ENCODE measurements at regions of chr2 and their contacts with region 1.

Region 1: DNA sequence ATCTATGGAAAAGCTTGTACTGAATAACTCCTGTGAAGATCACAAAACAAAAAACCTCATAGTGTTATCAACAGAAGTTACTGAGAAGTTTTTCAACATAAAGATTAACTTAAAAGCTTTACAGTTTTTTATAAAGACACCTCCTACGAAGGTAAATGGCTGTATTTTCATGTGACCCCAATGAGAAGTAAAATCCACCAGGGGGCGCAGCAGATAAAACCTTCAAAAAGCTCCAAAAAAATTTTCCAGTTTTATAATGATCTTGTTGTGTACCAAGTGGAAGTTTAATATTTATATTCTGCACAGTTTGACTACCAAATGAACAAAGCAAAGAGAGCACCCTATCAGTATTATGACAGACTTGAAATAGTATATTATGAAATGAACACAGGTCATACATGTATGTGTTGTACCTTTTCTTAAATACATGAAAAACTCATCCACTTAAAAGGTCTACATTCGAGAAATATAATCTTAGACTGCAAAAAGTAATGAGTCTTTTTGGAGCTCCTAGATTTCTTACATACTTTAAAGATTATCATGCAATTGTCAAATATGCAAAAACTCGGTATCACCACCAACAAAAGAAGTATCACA is 38.5 kb downstream of the PNO1 start:
- DNase-seq: no peak
- CTCF ChIP-seq: peak; percentile 39

Region 2: GRCh38 chr2:68169297-68169696 is 26.9 kb before region 1 on chr2:
- CTCF ChIA-PET with region 1: interaction called, 48 read pairs
- POLR2A ChIA-PET with region 1: no interaction called
- DNase-seq: no peak
- CTCF ChIP-seq: no peak

Region 3: GRCh38 chr2:68185541-68186164 is 10.6 kb before region 1 on chr2:
- CTCF ChIA-PET with region 1: interaction called, 61 read pairs
- POLR2A ChIA-PET with region 1: no interaction called
- DNase-seq: peak; percentile 31
- CTCF ChIP-seq: peak; percentile 54

Region 4: DNA sequence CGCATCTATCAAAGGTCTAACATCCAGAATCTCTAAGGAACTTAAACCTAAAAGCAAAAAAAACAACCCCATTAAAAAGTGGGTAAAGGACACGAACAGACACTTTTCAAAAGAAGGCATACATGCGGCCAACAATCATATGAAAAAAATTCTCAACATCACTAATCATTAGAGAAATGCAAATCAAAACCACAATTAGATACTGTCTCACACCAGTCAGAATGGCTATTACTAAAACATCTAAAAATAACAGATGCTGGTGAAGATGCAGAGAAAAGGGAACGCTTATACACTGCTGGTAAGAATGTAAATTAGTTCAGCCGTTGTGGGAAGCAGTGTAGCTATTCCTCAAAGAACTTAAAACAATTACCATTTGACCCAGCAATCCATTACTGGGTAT is 18.2 kb after region 1 on chr2:
- CTCF ChIA-PET with region 1: interaction called, 58 read pairs
- POLR2A ChIA-PET with region 1: no interaction called
- DNase-seq: no peak
- CTCF ChIP-seq: no peak

Region 5: DNA sequence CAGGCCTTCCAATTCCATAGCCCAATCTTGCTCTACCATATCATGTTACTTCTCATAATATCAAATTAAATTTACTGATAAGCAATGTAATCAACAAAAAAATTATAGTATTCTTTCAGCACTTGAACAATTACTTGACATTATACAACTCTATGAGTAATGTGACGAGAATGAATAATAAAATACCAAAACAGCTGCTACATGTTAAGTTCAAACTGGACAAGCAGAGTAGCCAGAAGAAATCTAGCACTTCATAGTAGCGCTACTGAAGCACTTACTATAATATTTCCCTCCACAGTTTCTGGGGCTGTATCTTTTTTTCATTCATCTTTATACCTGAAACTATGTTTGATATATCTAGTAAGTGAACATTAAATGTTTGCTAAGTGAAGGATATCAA is 41.2 kb after region 1 on chr2:
- CTCF ChIA-PET with region 1: interaction called, 18 read pairs
- POLR2A ChIA-PET with region 1: no interaction called
- DNase-seq: no peak
- CTCF ChIP-seq: no peak

Region 6: GRCh38 chr2:68282811-68283418 is 86.7 kb after region 1 on chr2:
- CTCF ChIA-PET with region 1: interaction called, 28 read pairs
- POLR2A ChIA-PET with region 1: no interaction called
- DNase-seq: peak; percentile 67
- CTCF ChIP-seq: peak; percentile 66